ENCODE measurements at regions of chr1 and their contacts with region 1.

Region 1: DNA sequence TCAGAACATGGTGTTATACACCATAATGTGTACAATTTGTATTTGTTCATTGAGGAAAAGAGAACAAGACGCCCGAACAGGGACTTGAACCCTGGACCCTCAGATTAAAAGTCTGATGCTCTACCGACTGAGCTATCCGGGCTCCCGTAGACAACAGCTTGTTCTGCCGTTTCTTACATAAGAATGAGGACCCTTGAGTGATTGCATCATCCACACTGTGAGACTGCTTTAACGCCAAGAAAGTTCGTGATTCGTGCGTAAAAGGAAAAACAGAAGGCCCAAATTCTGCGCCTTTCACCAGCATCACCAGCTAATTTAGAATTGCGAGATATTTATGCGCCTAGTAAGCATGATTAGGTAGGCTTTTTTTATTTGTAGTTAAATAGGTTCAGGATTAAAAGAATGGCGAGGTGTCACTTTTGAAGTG is 9.2 kb upstream of the MDM4 start:
- DNase-seq: peak; percentile 92
- ATAC-seq: peak; percentile 89
- H3K4me3 ChIP-seq: peak overlapping the region; percentile 48
- H3K27ac ChIP-seq: peak overlapping the region; percentile 49
- H3K4me1 ChIP-seq: no peaks in the 10 kb centered on the region
- H3K27me3 ChIP-seq: no peaks in the 10 kb centered on the region
- CTCF ChIP-seq: no peak
- POLR2A ChIP-seq: no peak; the same call in 1 of the 2 replicates
- RAD21 ChIP-seq: no peak

Region 2: DNA sequence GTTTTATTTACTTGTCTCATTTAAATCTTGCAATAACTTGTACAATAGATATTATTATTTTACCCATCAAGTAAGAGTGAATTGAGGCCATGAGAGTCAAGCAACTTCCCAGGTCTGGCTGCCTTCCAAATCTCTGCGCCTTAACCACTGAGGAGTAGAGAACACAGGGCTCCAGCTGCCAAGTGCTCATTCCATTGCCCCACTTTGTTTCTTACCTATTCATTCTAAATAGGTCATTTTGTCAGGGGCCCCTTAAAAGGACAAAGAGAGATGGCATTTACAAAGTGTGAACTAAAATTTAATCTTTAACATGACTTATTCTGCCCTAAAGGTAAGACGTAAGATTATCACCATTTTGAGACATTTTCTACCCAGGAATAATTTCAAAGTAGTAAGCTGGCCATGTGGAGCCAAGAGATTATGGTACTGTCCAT is 98.9 kb before region 1 on chr1:
- CTCF ChIA-PET with region 1: interaction called, 5 read pairs
- POLR2A ChIA-PET with region 1: no interaction called
- dilution Hi-C with region 1: no loop called
- in situ Hi-C with region 1: no loop called
- intact Hi-C with region 1: loop called (anchors 1 kb)
- DNase-seq: peak; percentile 74
- ATAC-seq: no peak
- H3K4me3 ChIP-seq: peak overlapping the region; percentile 85
- H3K27ac ChIP-seq: no peak overlapping the region
- H3K4me1 ChIP-seq: no peaks in the 10 kb centered on the region
- H3K27me3 ChIP-seq: no peaks in the 10 kb centered on the region
- CTCF ChIP-seq: no peak
- POLR2A ChIP-seq: no peak
- RAD21 ChIP-seq: no peak

Region 3: DNA sequence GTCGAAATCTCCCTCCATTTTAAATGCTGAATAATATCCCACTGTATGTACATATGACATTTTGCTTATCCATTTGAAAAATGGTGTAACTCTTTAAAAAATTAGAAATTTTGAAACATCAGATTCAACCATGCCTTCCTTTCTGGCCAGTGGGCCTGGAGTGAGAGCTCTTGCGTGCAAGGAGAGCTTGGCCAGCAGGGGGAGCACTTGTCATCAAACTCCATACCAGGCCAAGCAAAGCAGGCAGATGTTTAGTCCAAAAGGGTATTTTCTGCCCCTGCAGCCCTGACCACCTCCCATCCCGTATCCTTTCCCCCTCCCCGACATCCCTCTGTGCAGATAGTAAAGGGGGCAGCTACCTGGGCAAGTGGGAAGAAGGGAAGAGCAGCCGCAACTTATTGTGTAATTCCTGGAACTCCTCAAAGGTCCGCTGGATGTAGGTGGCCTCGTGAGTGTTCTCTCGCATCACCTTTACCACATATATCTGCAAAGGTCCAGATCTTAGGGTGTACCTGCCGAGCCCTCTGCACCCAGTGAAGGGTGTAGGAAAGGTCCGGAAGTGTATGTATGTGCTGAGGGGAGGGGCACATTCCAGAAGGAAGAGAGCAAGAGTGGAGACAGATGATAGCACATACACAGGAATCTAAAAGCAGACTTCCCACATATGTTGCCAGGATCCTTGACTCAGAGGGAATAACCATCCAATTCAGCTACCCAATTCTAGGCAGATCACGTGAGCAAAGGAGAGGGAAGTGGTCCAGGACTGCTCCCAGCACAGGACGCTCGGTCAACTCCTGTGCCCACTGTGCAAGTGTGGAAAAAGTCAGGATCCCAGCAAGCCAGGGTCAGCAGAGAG is 75.4 kb before region 1 on chr1:
- CTCF ChIA-PET with region 1: interaction called, 8 read pairs
- POLR2A ChIA-PET with region 1: no interaction called
- dilution Hi-C with region 1: no loop called
- in situ Hi-C with region 1: no loop called
- intact Hi-C with region 1: loop called (anchors 1 kb)
- DNase-seq: peak; percentile 82
- ATAC-seq: peak; percentile 94
- H3K4me3 ChIP-seq: no peak overlapping the region
- H3K27ac ChIP-seq: no peak overlapping the region
- H3K4me1 ChIP-seq: peaks cover 3% of the 10 kb centered on the region; the same call in 1 of the 2 replicates
- H3K27me3 ChIP-seq: no peaks in the 10 kb centered on the region
- CTCF ChIP-seq: peak; percentile 78
- POLR2A ChIP-seq: no peak
- RAD21 ChIP-seq: peak; percentile 69

Region 4: GRCh38 chr1:204446370-204447111 is 60.4 kb before region 1 on chr1:
- CTCF ChIA-PET with region 1: interaction called, 30 read pairs
- POLR2A ChIA-PET with region 1: no interaction called
- dilution Hi-C with region 1: no loop called
- in situ Hi-C with region 1: loop called (anchors 5 kb)
- intact Hi-C with region 1: loop called (anchors 1 kb)
- DNase-seq: peak; percentile 62
- ATAC-seq: peak; percentile 96
- H3K4me3 ChIP-seq: no peak overlapping the region
- H3K27ac ChIP-seq: no peak overlapping the region
- H3K4me1 ChIP-seq: no peaks in the 10 kb centered on the region
- H3K27me3 ChIP-seq: no peaks in the 10 kb centered on the region
- CTCF ChIP-seq: peak; percentile 84
- POLR2A ChIP-seq: no peak
- RAD21 ChIP-seq: peak; percentile 83